MCF 10A (cell line): ENCODE measurements at regions of chr13 and their contacts with region 1.

Region 1: GRCh38 chr13:47459512-47459911 is 541.6 kb downstream of the SUCLA2 start:
- DNase-seq: peak; percentile 17
- H3K4me3 Mint-ChIP-seq: no peak overlapping the region
- H3K27ac Mint-ChIP-seq: peak overlapping the region; percentile 82
- H3K4me1 Mint-ChIP-seq: peaks cover 23% of the 10 kb centered on the region
- H3K27me3 Mint-ChIP-seq: no peaks in the 10 kb centered on the region
- CTCF ChIP-seq: no peak

Region 2: GRCh38 chr13:47588676-47589075 is 129.2 kb after region 1 on chr13:
- CTCF ChIA-PET with region 1: no interaction called
- POLR2A ChIA-PET with region 1: no interaction called
- intact Hi-C with region 1: loop called (anchors 5 kb)
- DNase-seq: peak; percentile 1
- H3K4me3 Mint-ChIP-seq: no peak overlapping the region
- H3K27ac Mint-ChIP-seq: no peak overlapping the region
- H3K4me1 Mint-ChIP-seq: no peaks in the 10 kb centered on the region
- H3K27me3 Mint-ChIP-seq: no peaks in the 10 kb centered on the region
- CTCF ChIP-seq: no peak